ENCODE measurements at regions of chr5 and their contacts with region 1.

Region 1: DNA sequence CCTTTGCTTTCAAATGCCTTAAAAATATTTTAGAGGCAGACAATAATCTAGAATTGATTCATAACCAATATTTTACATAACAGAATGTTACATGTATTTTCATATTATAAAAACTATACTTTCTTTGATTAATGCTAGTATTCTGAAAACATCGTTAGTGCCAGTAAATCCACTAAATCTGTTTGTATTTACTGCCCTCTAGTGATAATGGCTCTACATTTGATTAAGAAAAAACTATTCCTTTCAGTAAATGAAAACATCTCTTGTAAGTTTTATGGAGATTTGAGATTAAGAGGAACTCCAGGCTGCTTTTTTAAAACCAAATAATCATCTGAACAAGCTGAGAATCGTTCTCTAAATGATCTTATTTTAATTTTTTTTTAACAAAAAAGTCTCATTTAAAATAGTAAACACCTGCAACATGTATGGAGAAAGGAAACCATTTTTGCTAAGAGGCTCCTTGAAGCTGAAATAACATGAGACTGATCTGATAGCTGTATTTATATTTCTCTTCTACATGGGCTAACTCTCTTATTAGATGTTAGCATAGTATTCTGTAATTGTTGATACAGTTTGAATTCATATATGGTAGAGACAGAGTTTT is 424.7 kb downstream of the RAB3C start:
- DNase-seq: no peak
- ATAC-seq: no peak
- H3K4me3 ChIP-seq: no peak overlapping the region
- H3K27ac ChIP-seq: no peak overlapping the region
- H3K4me1 ChIP-seq: no peaks in the 10 kb centered on the region
- H3K27me3 ChIP-seq: no peaks in the 10 kb centered on the region
- CTCF ChIP-seq: peak; percentile 19 to 67 (median 53)
- POLR2A ChIP-seq: no peak

Region 2: DNA sequence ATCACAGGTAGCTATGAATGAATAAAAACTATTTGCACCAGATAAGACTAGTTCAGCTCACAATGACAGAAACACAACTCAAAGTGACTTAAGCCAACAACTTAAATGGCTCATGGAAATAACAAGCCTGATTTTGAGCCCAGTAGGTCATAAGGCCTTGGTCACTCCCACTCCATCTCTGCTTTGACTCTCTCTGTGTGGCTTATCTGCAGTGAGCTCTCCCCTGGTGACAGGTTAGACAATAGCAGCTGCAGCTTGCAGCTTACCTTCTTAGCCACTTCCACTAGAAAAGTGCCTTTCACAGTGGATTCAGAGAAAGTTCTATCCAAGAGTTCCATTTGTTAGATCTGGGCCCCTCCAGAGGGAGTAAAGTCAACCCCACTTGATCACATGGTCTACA is 109.0 kb before region 1 on chr5:
- intact Hi-C with region 1: loop called (anchors 5 kb)
- DNase-seq: no peak
- ATAC-seq: no peak
- H3K4me3 ChIP-seq: no peak overlapping the region
- H3K27ac ChIP-seq: no peak overlapping the region
- H3K4me1 ChIP-seq: no peaks in the 10 kb centered on the region
- H3K27me3 ChIP-seq: no peaks in the 10 kb centered on the region
- CTCF ChIP-seq: no peak
- POLR2A ChIP-seq: no peak

Region 3: DNA sequence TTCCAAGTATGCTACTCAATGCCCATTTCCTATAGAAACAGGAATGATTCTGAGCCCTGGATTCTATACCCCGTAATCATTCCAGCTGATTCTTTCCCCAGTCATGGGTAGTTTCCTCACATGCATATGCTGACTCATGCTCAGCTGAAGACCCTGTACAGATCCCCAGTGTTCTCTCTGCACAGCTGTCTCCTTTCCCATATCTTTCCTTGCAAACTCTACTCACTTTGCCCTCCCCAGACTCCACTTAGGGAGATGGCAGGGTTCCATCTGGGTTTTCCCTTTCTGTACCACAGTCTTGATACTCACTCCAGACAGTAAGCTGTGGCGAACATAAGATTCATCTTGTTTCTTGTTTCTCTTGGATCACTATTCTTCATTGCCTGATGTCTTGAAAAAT is 67.1 kb before region 1 on chr5:
- intact Hi-C with region 1: no loop called
- DNase-seq: peak; percentile 23 to 71 (median 63)
- ATAC-seq: peak; percentile 81
- H3K4me3 ChIP-seq: no peak overlapping the region
- H3K27ac ChIP-seq: peak overlapping the region in 1 of 4 donors; percentile 26
- H3K4me1 ChIP-seq: peaks cover 19% of the 10 kb centered on the region
- H3K27me3 ChIP-seq: no peaks in the 10 kb centered on the region
- CTCF ChIP-seq: no peak
- POLR2A ChIP-seq: no peak

Region 4: GRCh38 chr5:59126708-59127573 is 119.4 kb after region 1 on chr5:
- intact Hi-C with region 1: no loop called
- DNase-seq: no peak
- ATAC-seq: no peak
- H3K4me3 ChIP-seq: no peak overlapping the region
- H3K27ac ChIP-seq: peak overlapping the region in 2 of 4 donors; percentile 51 to 64
- H3K4me1 ChIP-seq: peaks cover 16% of the 10 kb centered on the region
- H3K27me3 ChIP-seq: no peaks in the 10 kb centered on the region
- CTCF ChIP-seq: no peak
- POLR2A ChIP-seq: no peak

Measured in body of pancreas (tissue), 4 donors.